Heart right ventricle (tissue), 16 donors: ENCODE measurements at regions of chr1 and their contacts with region 1.

Region 1: DNA sequence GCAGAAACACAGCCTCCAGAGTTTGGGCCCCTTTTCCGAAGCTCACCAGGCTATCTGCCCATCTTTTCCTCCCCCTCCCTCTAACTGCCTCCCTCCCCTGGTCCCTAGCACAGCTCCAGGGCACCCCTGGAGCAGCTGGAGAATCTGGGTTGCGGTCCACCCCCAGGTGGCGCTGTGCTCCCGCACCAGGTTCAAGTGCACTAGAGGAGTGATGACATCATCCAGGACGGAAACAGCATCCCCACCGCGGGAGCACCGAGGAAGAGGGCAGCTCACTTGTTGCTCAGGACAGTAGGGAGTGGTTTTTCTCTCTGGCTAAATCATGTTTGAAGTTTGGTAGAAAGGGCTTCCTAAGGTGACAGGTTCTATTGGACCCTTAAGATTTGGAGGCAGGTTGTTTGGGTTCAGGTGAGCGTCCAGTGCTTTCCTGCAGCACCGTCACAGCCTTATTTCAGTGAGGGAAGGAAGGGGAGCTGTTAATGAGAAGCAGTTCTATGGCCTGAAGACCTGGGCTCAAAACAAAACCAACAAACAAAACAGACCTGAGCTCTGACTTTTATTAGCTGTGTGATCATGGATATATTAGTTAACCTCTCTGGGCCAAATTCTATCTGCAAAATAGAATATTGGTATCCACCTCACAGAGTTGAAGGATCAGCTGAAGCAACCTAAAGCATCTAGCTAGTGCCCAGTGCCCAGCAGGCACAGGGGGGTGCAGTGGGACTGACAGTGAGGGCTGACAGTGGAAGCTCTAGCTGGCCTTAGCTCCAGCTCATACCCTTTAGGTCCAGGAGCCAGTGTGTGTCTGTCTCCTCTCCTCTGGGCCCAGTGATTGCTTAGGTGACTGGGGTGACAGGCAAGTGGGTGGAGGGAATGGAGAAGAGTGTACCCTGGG is 7.5 kb downstream of the SHISA4 start:
- DNase-seq: peak; percentile 90 to 91
- ATAC-seq: peak; percentile 78 to 93 (median 88)
- H3K4me3 ChIP-seq: peak overlapping the region in 2 of 10 donors; percentile 7 to 16
- H3K27ac ChIP-seq: peak overlapping the region; percentile 11 to 85 (median 66)
- H3K4me1 ChIP-seq: peaks cover 3 to 26% (median 11%) of the 10 kb centered on the region in 9 donors
- H3K27me3 ChIP-seq: no peaks in the 10 kb centered on the region
- CTCF ChIP-seq: peak; percentile 83 to 97 (median 95)

Region 2: DNA sequence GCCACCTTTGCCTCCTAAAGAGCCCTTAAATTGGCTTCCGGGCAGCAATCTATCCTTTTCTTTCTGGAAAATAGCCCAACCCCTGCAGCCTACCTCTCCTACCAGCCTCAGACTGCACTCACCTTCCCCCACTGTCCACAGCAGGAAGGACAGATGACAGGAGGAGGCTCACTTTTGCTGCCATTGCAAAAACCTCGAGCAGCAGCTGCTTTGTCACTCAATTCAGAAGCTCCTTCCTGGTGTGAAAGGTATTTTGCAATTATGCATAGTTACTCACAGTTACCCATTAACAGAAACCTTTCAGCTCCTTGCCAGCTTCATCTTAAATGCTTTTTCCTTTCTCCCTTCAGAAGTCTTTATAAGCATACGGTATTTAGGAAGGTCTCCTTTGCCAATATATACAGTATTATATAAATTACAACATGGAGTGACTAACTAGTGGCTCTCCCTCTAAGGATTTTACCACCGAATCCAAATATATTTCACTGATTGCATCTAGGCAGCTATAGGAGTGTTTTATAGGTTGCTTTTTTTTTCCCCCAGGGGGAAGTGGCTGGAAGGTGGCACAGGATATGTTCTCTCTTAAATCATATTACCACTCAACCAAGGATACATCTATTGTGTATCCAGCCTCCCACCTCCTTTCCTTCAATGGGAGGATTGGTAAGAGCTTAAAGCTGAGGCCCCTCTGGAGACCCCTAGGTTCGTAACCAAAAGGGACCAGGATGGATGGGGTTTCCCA is 209.3 kb before region 1 on chr1:
- intact Hi-C with region 1: no loop called
- DNase-seq: no peak
- ATAC-seq: no peak
- H3K4me3 ChIP-seq: no peak overlapping the region
- H3K27ac ChIP-seq: no peak overlapping the region
- H3K4me1 ChIP-seq: peaks cover 4 to 45% (median 21%) of the 10 kb centered on the region in 9 donors
- H3K27me3 ChIP-seq: no peaks in the 10 kb centered on the region
- CTCF ChIP-seq: no peak

Region 3: DNA sequence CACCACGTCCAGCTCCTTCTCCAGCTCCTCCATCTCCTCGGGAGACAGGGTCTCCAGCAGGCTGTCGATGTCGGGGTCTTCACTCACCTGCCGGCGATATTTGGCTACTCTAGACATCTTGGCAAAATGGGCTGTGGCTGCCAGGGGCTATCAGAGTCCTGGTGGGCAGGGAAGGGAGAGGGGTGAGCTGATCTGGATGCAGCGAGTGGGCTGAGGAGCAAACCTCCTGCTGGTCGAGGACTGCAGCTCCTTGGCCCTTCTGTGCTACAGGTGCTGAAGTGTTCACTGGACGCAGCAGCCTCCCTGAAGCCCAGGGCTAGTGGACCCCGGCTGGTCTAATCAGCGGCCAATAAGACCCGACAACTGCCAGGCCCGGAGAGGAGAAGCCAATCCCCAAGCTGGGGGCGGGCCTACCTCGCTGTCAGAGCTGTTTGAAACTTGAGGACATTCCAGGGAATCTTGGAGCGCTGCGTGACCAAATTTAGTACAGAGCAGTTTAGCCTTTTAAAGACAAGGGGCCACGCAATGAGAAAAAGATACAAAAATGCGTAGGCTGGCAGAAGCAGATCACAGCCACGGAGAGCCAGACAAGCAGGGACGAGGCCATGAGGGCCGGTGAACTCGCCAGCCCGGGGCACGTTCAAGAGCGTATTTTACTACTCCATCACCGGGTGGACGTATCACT is 50.2 kb after region 1 on chr1 and contains the start of gene LMOD1:
- intact Hi-C with region 1: loop called in 2 of 10 experiments (anchors 5 to 10 kb)
- DNase-seq: peak; percentile 81 to 85
- ATAC-seq: peak; percentile 90 to 96 (median 94)
- H3K4me3 ChIP-seq: peak within 1 kb of the TSS; percentile 18 to 70 (median 52)
- H3K27ac ChIP-seq: peak within 1 kb of the TSS; percentile 17 to 78 (median 68)
- H3K4me1 ChIP-seq: peaks cover 0 to 41% (median 6%) of the 10 kb centered on the region in 9 donors
- H3K27me3 ChIP-seq: peaks cover 0 to 42% (median 4%) of the 10 kb centered on the region in 7 donors
- CTCF ChIP-seq: no peak
- total RNA-seq, gene LMOD1: 3.6 to 15.2 (median 9.6) TPM

Region 4: DNA sequence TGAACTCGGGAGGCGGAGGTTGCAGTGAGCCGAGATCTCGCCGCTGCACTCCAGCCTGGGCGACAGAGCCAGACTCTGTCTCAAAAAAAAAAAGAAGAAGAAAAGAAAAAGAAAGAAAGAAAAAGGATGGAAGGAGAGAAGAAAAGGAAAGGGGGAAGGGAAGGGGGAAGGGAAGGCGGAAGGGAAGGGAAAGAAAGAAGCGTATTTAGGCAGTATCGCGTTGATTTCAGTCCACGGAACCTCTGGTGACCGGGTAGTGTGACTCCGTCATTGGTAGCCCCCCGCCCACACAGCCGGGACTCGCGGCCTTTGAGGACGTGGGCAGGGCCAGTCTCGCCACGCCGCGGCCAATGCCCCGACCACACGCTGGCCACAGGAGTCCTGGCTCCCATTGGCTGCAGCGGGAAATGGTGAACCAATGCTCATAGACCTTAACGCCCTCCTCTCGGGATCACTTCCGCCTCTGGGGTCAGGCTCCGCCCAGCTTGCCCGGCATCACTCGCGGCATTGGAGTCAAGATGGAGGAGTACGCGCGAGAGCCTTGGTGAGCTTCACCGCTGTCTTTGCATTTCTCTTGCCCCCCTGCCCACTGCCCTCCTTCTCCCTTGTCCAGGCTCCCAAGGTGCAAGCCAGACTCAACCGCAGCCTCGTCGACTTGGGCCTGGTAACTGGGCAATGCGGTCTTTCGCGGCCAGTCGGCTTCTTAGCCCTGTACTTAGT is 59.0 kb after region 1 on chr1 and contains the start of gene TIMM17A:
- intact Hi-C with region 1: loop called in 1 of 10 experiments (anchors 5 kb)
- DNase-seq: peak; percentile 94 to 97
- ATAC-seq: peak; percentile 99 to 100 (median 100)
- H3K4me3 ChIP-seq: peak within 1 kb of the TSS; percentile 66 to 94 (median 82)
- H3K27ac ChIP-seq: peak within 1 kb of the TSS; percentile 30 to 91 (median 84)
- H3K4me1 ChIP-seq: peaks cover 3 to 27% (median 16%) of the 10 kb centered on the region in 9 donors
- H3K27me3 ChIP-seq: no peaks in the 10 kb centered on the region
- CTCF ChIP-seq: peak in 2 of 9 donors; percentile 7 to 14
- total RNA-seq, gene TIMM17A: 71.1 to 113 (median 88.9) TPM

Region 5: DNA sequence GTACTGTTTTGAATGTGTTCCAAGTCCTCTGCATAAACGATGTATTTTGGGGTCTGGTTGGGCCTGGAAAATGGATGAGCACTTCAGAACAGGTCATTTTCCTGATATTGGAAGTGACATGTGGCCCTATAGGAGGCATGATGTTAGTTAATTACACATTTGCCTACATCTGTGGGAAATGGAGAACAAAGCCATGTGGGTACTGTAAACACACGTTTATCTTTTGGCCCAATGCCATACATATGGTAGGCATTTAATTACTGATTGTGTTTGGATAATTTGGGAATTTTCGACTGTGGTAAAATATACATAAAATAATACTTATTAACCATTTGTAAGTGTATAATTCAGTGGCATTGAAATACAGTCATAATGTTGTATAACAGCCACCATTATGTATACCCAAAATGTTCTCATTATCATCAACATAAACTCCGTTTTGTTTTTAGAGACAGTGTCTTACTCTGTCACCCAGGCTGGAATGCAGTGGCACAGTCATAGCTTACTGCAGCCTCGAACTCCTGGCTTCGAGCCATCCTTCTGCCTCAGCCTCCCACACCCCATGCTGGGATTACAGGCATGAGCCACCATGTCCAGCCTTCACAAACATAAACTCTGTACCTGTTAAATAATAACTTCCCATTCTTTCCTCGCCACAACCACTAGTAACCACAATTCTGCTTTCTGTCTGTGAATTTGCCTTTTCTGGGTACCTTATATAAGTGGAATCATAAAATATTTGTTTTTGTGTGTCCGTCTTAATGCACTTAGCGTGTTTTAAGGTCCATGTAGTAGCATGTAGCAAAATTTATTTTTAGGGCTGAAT is 74.4 kb after region 1 on chr1:
- intact Hi-C with region 1: loop called (anchors 1 to 5 kb)
- DNase-seq: no peak
- ATAC-seq: peak in 1 of 8 donors; percentile 31
- H3K4me3 ChIP-seq: no peak overlapping the region
- H3K27ac ChIP-seq: peak overlapping the region in 1 of 10 donors; percentile 1
- H3K4me1 ChIP-seq: peaks cover 0 to 10% (median 3%) of the 10 kb centered on the region in 9 donors
- H3K27me3 ChIP-seq: no peaks in the 10 kb centered on the region
- CTCF ChIP-seq: no peak

Region 6: DNA sequence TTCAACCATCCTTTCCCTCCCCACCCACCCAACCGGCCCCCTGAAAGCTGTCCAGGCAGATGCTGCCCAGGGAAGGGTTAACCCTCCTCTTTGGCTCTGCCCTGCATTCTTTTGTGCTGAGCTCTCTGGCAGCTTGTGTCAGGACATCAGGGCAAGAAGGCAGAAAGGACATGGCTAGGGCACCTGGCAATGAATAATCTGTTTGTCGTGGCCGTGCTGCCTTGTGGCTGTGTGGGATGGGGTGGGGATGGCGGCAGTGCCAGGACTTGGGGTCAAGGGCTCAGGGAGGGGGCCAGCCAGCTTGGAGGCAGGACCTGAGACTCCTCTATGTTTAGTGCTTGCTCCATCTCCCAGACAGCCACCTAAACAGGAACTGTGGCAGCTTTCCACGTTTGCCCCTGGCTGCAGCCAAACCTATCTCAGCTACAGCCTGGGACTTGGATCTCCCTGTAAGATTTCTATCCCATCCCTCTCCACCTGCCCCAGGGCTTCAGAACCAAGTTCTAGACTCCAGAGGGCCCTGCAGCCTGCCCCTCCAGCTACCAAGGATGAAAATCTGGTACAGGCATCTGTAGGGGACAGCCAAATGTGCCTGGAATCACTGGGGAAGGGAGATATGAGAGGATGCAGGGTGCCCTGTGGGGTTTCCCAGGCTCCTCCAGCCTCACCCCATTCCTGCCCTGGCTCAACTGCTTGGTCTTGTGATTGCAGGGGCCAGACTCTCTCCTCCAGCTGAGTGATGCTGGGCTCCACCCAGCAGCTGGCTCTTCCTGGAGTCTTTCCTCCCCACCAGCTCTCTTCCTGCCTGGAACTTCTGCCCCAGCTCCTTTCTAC is 216.9 kb after region 1 on chr1:
- intact Hi-C with region 1: loop called in 2 of 10 experiments (anchors 10 kb)
- DNase-seq: peak; percentile 61 to 68
- ATAC-seq: peak; percentile 62 to 80 (median 77)
- H3K4me3 ChIP-seq: no peak overlapping the region
- H3K27ac ChIP-seq: peak overlapping the region; percentile 39 to 85 (median 70)
- H3K4me1 ChIP-seq: peaks cover 0 to 33% (median 19%) of the 10 kb centered on the region in 9 donors
- H3K27me3 ChIP-seq: no peaks in the 10 kb centered on the region
- CTCF ChIP-seq: no peak

Region 7: GRCh38 chr1:202135221-202135721 is 239.1 kb after region 1 on chr1:
- intact Hi-C with region 1: loop called in 2 of 10 experiments (anchors 10 kb)
- DNase-seq: peak; percentile 31 to 36
- ATAC-seq: peak; percentile 15 to 74 (median 62)
- H3K4me3 ChIP-seq: no peak overlapping the region
- H3K27ac ChIP-seq: peak overlapping the region in 1 of 10 donors; percentile 12
- H3K4me1 ChIP-seq: peaks cover 4 to 37% (median 19%) of the 10 kb centered on the region in 9 donors
- H3K27me3 ChIP-seq: no peaks in the 10 kb centered on the region
- CTCF ChIP-seq: peak; percentile 79 to 92 (median 89)

Region 8: GRCh38 chr1:202615501-202616354 is 719.6 kb after region 1 on chr1:
- intact Hi-C with region 1: no loop called
- DNase-seq: peak; percentile 36 to 49
- ATAC-seq: peak; percentile 68 to 90 (median 81)
- H3K4me3 ChIP-seq: no peak overlapping the region
- H3K27ac ChIP-seq: peak overlapping the region; percentile 7 to 86 (median 72)
- H3K4me1 ChIP-seq: peaks cover 9 to 55% (median 37%) of the 10 kb centered on the region in 9 donors
- H3K27me3 ChIP-seq: peaks cover 0 to 86% (median 0%) of the 10 kb centered on the region in 7 donors
- CTCF ChIP-seq: no peak